WTC11 (cell line): ENCODE measurements at regions of chr1 and their contacts with region 1.

Region 1: GRCh38 chr1:161071886-161072371 is 2.2 kb upstream of the ARHGAP30 start:
- DNase-seq: peak; percentile 72
- ATAC-seq: peak; percentile 66
- H3K4me3 Mint-ChIP-seq: no peak overlapping the region
- H3K27ac Mint-ChIP-seq: peak overlapping the region; percentile 32; the same call in 1 of the 2 replicates
- H3K4me1 Mint-ChIP-seq: peaks cover 22% of the 10 kb centered on the region
- H3K27me3 Mint-ChIP-seq: peaks cover 4% of the 10 kb centered on the region; the same call in 1 of the 2 replicates
- CTCF ChIP-seq: peak; percentile 52

Region 2: DNA sequence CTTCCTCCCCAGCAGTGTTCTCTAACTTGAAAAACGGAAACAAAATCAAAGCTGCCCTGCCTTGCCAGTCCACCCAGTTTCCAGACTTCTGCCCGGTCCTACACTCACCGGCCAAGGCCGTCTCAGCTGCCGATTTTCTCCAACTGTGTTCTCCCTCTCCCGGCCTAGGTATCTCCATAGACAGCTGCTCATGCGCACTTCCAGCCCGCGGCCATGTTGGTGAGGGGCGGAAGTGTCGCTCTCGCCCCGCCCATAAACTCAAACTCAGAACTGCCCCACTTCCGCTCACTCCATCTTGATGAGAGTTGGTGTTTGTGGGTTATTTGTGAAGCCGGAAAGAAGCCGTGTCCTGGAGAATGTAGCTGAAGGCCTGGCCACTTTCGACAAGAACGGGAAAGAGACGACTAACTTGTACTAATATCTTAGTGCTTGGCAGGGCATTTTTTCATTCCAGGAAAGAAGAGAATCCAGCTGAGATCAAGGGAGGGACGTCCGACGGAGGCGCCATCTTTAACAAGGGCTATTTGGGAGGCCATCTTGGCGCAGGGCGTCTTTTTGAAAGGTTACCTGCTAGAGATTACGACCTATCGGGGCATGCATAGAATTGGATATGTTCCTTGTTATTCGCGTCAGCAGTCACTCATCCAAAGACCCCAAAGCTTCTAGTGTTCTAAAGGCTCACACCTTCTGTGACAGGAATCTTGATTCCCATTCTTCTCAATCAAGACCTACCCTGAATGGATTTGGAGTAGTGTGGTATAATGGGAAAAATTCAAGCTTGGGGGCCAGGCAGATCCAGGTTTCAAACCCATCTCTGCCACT is 26.0 kb before region 1 on chr1 and contains the start of gene USF1:
- CTCF ChIA-PET with region 1: interaction called, 14 read pairs
- POLR2A ChIA-PET with region 1: interaction called, 11 read pairs
- DNase-seq: peak; percentile 92
- ATAC-seq: peak; percentile 77
- H3K4me3 Mint-ChIP-seq: peak within 1 kb of the TSS; percentile 97
- H3K27ac Mint-ChIP-seq: peak within 1 kb of the TSS; percentile 100
- H3K4me1 Mint-ChIP-seq: peaks cover 24% of the 10 kb centered on the region
- H3K27me3 Mint-ChIP-seq: peaks cover 38% of the 10 kb centered on the region
- CTCF ChIP-seq: no peak
- total RNA-seq, gene USF1: 55.9 to 65.6 TPM (median 57.8 TPM) in 3 replicates

Region 3: GRCh38 chr1:161089171-161089924 is 17.4 kb after region 1 on chr1 and contains the start of gene NECTIN4:
- CTCF ChIA-PET with region 1: interaction called, 109 read pairs
- POLR2A ChIA-PET with region 1: interaction called, 3 read pairs
- DNase-seq: peak; percentile 46
- ATAC-seq: peak; percentile 77
- H3K4me3 Mint-ChIP-seq: no peak within 1 kb of the TSS
- H3K27ac Mint-ChIP-seq: no peak within 1 kb of the TSS
- H3K4me1 Mint-ChIP-seq: peaks cover 21% of the 10 kb centered on the region
- H3K27me3 Mint-ChIP-seq: no peaks in the 10 kb centered on the region
- CTCF ChIP-seq: no peak
- total RNA-seq, gene NECTIN4: 0.46 to 1.7 TPM (median 0.48 TPM) in 3 replicates

Region 4: DNA sequence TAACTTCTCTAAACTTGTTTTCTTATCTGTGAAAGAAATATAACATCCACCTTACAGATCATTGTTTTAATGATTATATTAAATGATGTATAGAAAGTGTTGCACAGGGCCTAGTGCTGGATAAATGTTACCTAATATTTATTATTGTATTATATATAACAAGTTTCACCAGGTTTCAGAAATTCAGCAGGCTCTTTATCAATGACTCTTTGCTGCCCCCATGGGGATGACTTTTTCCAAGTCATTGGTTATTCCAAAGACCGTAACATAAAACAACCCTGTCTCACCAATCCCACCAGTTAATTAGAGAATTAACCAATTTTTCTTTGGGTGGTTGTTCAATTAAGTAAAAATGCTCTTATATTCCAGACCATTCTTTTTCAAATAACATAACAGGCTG is 67.8 kb after region 1 on chr1:
- CTCF ChIA-PET with region 1: interaction called, 17 read pairs
- POLR2A ChIA-PET with region 1: no interaction called
- DNase-seq: peak; percentile 30
- ATAC-seq: peak; percentile 59; the same call in 1 of the 2 replicates
- H3K4me3 Mint-ChIP-seq: no peak overlapping the region
- H3K27ac Mint-ChIP-seq: no peak overlapping the region
- H3K4me1 Mint-ChIP-seq: peaks cover 8% of the 10 kb centered on the region
- H3K27me3 Mint-ChIP-seq: no peaks in the 10 kb centered on the region
- CTCF ChIP-seq: 0 out of 2 replicates have a peak, but pooled peaks have one; percentile 26